Heart left ventricle (tissue), 16 donors: ENCODE measurements at regions of chr2 and their contacts with region 1.

Region 1: DNA sequence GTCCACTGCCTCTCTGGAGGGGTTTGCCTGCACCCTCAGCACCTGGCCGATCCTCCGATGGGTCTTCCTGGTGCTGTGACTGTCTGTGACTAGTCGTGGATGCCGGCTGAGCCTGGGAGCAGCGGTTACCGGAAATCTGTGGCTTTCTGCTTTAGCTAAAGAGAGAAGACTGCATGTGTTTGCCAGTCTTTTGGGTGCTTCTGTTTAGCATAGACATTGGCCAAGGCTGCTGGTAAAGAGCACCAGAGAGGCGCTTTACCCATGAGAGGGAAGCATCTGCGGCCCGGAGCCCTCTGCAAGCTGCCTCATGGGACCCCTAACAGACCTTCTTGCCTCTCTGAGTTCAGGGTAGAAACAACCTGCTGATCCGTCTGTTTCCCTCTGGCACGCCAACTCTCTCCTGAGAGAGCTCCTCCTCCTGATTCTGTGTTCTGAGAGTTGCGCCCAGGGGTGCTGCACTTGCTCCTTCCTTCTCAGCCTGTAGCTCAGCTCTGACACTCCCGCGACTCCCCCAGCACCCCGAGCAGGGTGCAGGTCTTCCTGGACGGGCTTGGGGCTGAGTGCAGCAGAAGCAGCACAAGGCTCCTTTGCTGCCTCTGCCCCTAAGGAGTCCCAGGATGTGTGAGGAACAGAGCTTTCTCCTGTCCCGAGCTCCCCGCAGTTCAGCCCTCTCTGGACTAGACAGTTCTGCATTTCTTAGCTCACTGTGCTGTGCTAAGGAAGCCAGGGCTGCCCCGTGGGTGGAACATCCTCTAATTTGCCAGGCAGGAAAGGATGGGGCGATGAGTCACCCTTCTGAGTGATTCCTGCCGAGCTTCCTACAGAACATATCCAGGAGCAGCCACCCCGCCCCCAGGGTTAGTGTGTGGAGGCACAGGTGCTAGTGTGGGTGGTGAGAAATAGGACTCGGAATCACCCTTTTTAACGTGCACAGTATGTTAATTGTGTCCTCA is 203.2 kb downstream of the SH3RF3 start:
- DNase-seq: peak; percentile 66 to 88 (median 75)
- ATAC-seq: peak; percentile 83 to 96 (median 94)
- H3K4me3 ChIP-seq: peak overlapping the region in 7 of 12 donors; percentile 2 to 40 (median 34)
- H3K27ac ChIP-seq: peak overlapping the region in 10 of 12 donors; percentile 8 to 74 (median 56)
- H3K4me1 ChIP-seq: peaks cover 0 to 61% (median 20%) of the 10 kb centered on the region in 12 donors
- H3K27me3 ChIP-seq: no peaks in the 10 kb centered on the region
- CTCF ChIP-seq: no peak
- POLR2A ChIP-seq: peak in 1 of 2 donors; percentile 15

Region 2: DNA sequence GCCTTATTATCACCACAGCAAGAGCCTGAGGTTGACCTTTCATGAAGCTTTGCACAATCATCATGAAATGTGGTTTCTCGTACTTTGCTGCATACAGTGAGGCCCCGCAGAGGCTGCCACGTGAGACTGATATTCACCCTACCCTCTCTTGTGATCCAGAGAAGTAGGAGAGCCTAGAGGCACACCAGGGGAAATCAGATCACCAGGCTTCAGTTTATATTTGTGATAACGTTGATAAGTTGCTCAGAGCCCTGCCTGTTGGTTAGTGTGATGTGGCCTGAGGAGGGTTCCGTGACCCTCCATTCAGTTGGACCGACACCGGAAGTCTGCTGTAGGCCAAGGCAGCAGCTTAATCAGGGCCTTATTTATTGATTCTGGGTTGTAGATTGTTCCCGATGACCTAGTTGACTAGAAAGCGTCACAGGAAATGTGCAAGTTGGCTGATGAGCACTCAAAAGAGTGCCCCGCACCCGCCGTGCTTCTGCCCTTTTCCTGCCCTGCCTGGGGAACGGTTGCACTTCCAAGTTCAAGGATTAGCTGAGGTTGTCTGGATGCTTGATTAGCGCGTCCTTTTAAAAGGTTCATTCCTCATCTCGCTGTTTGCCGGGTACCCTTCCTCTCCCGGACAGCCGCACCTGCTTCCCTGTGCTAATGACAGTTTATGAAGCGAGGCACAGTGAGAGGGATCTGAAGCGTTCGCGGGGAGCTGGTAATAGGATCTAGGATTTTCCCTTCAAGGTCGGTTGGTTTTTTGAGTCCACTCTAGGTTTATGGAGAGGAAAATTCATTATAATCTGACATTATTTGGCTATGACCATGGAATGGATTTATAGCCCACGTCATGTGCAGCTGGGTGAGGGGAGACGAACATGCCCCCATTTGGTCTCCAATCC is 56.8 kb before region 1 on chr2:
- intact Hi-C with region 1: loop called in 2 of 10 experiments (anchors 5 kb)
- DNase-seq: peak in 1 of 5 donors; percentile 36
- ATAC-seq: peak in 2 of 4 donors; percentile 10 to 47
- H3K4me3 ChIP-seq: no peak overlapping the region
- H3K27ac ChIP-seq: no peak overlapping the region
- H3K4me1 ChIP-seq: peaks cover 0 to 22% (median 12%) of the 10 kb centered on the region in 12 donors
- H3K27me3 ChIP-seq: no peaks in the 10 kb centered on the region
- CTCF ChIP-seq: no peak
- POLR2A ChIP-seq: no peak